AG04449 (cell line): ENCODE measurements at regions of chr17 and their contacts with region 1.

Region 1: GRCh38 chr17:45172454-45173286 is 11.0 kb downstream of the HEXIM2 start:
- DNase-seq: no peak
- H3K4me3 ChIP-seq: peak overlapping the region; percentile 30
- CTCF ChIP-seq: no peak

Region 2: GRCh38 chr17:45161019-45161825 is 11.4 kb before region 1 on chr17:
- CTCF ChIA-PET with region 1: interaction called, 14 read pairs
- POLR2A ChIA-PET with region 1: interaction called, 40 read pairs
- DNase-seq: peak; percentile 100
- H3K4me3 ChIP-seq: peak overlapping the region; percentile 92
- CTCF ChIP-seq: no peak

Region 3: DNA sequence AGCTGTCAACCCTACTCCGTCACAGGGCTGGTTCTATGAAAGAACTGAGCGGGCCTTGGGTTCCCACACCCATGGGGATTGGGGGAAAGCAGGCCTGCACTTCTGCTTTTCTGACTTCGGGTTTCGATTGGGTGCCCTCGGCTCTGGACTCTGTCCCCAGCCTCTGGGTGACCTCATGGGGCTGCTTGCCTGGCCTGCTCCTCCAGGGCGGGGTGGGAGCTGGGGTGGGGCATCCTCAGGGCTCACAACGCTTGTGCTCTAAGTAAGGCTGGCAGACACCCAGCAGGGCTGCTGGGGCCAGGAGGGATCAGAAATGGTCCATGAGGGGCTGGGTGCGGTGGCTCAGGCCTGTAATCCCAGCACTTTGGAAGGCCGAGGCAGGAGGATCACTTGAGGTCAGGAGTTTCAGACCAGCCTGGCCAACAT is 240.8 kb after region 1 on chr17:
- CTCF ChIA-PET with region 1: no interaction called
- POLR2A ChIA-PET with region 1: no interaction called
- DNase-seq: no peak
- H3K4me3 ChIP-seq: no peak overlapping the region
- CTCF ChIP-seq: no peak